ENCODE measurements at regions of chr19 and their contacts with region 1.

Region 1: DNA sequence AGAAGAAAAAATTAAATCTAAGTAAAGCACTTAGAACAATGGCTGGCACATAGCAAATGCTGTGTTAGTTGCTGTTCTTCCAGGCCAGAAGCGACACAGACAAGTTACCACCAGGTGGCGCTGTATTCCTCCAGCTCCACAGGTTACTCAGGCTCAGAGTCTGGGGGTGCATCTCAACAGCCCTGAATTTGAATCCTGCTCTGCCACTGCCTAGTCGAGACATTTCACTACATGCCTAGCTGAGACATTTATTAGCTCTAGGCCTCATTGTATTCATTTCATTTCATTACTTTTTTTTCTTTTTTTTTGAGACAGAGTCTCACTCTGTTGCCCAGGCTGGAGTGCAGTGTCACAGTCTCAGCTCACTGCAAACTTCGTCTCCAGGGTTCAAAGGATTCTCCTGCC is 16.4 kb upstream of the CYP2B6 start:
- DNase-seq: no peak

Region 2: GRCh38 chr19:40768869-40769268 is 205.8 kb before region 1 on chr19:
- intact Hi-C with region 1: loop called in 1 of 2 experiments (anchors 5 kb)
- DNase-seq: no peak

Region 3: GRCh38 chr19:41095703-41096102 is 121.1 kb after region 1 on chr19:
- intact Hi-C with region 1: no loop called
- DNase-seq: no peak

Region 4: DNA sequence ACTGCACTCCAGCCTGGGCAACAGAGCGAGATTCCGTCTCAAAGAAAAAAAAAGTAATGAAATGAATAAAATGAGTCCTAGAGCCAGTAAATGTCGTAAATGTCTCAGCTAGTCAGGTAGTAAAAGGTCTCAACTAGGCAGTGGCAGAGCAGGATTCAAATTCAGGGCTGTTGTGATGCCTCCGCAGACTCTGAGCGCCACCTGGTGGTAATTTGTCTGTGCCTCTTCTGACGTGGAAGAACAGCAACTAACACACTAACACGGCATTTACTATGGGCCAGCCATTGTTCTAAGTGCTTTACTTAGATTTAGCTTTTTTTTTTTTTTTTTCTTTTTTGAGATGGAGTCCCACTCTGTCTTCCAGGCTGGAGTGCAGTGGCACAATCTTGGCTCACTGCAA is 169.8 kb after region 1 on chr19:
- intact Hi-C with region 1: loop called in 1 of 2 experiments (anchors 5 kb)
- DNase-seq: peak; percentile 89

Region 5: DNA sequence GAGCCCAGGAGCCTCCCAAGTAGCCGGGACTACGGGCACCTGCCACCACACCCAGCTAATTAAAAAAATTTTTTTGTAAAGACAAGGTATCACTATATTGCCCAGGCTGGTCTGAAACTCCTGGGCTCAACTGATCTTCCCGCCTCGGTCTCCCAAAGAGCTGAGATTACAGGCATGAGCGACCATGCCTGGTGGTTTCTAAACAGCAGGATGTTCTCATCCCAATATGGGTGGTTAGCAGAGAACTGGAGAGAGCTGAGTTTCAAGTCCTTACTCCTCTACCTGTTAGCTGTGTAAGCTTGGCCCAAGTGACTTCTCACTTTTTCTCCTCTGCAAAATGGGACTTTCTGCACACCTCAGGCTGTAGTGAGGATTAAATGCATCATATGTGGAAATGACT is 409.7 kb after region 1 on chr19:
- intact Hi-C with region 1: loop called in 1 of 2 experiments (anchors 5 kb)
- DNase-seq: no peak